ENCODE measurements at regions of chrX and their contacts with region 1.

Region 1: GRCh38 chrX:54639346-54640102 is 109.5 kb downstream of the GNL3L start:
- DNase-seq: peak; percentile 92 to 95
- ATAC-seq: peak; percentile 73 to 79
- H3K4me3 ChIP-seq: peak overlapping the region; percentile 53 to 63 (median 60)
- H3K27ac ChIP-seq: peak overlapping the region; percentile 85 to 92 (median 90)
- H3K4me1 ChIP-seq: peaks cover 13 to 20% of the 10 kb centered on the region in 2 donors
- H3K27me3 ChIP-seq: no peaks in the 10 kb centered on the region
- CTCF ChIP-seq: peak in 4 of 5 experiments; percentile 71 to 82 (median 76)
- POLR2A ChIP-seq: peak; percentile 62 to 81

Region 2: DNA sequence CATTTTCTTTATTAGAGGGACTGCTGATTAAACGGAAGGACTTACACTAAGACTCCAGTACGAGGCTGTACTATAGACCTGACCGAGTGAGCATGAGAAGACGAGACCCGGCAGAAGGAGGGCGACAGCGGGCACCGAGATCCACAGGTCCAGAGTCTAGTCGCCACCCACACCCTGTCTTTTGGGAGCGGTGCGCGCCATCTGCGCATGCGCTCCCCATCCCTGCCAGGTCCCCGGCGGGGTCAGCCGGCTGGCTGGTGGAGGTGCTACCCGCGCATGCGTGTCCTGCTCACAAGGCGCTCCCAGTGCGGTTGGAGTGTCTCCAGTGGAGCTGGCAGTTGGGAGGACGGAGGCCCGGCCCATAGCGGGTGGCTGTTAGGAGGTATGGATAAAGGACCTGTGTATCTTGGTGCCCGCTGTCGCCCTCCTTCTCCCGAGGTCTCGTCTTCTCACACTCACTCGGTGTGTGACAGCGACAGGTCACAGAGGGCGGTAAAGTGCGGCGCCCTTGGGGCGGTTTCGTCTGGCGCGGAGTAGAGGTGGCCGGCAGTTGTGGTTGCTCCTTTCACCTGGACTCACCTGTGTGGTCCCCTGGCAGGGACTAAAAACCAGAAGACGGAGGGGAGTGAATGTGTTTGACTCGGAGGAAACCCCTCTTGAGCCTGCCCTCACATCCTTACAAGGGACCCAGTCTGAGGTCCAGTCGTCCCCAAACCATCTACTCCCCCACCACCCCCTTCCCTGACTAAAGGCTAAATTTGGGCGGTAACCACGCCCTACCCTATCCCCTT is 1197.8 kb before region 1 on chrX:
- in situ Hi-C with region 1: no loop called
- intact Hi-C with region 1: loop called (anchors 2 kb)
- DNase-seq: peak; percentile 66 to 87
- ATAC-seq: peak; percentile 64 to 76
- H3K4me3 ChIP-seq: peak overlapping the region; percentile 44 to 57 (median 55)
- H3K27ac ChIP-seq: peak overlapping the region; percentile 83 to 94 (median 90)
- H3K4me1 ChIP-seq: no peaks in the 10 kb centered on the region
- H3K27me3 ChIP-seq: peaks cover 0 to 12% (median 4%) of the 10 kb centered on the region in 3 donors
- CTCF ChIP-seq: no peak
- POLR2A ChIP-seq: peak; percentile 66 to 72

Region 3: GRCh38 chrX:54182864-54183608 is 456.5 kb before region 1 on chrX and contains the start of gene FAM120C:
- in situ Hi-C with region 1: no loop called
- intact Hi-C with region 1: loop called (anchors 5 kb)
- DNase-seq: peak; percentile 37 to 61
- ATAC-seq: peak; percentile 85 to 90
- H3K4me3 ChIP-seq: peak within 1 kb of the TSS; percentile 69 to 75 (median 72)
- H3K27ac ChIP-seq: peak within 1 kb of the TSS; percentile 84 to 93 (median 88)
- H3K4me1 ChIP-seq: peaks cover 28 to 32% of the 10 kb centered on the region in 2 donors
- H3K27me3 ChIP-seq: no peaks in the 10 kb centered on the region
- CTCF ChIP-seq: no peak
- POLR2A ChIP-seq: no peak
- total RNA-seq, gene FAM120C: 4.7 to 12.8 (median 10.9) TPM

Region 4: GRCh38 chrX:54659547-54659946 is 20.0 kb after region 1 on chrX:
- in situ Hi-C with region 1: no loop called
- intact Hi-C with region 1: no loop called
- DNase-seq: no peak
- ATAC-seq: no peak
- H3K4me3 ChIP-seq: no peak overlapping the region
- H3K27ac ChIP-seq: no peak overlapping the region
- H3K4me1 ChIP-seq: no peaks in the 10 kb centered on the region
- H3K27me3 ChIP-seq: no peaks in the 10 kb centered on the region
- CTCF ChIP-seq: no peak
- POLR2A ChIP-seq: no peak

Region 5: GRCh38 chrX:54708404-54708803 is 68.9 kb after region 1 on chrX:
- in situ Hi-C with region 1: no loop called
- intact Hi-C with region 1: loop called (anchors 5 kb)
- DNase-seq: peak; percentile 1 to 30
- ATAC-seq: peak in 1 of 2 donors; percentile 87
- H3K4me3 ChIP-seq: no peak overlapping the region
- H3K27ac ChIP-seq: no peak overlapping the region
- H3K4me1 ChIP-seq: peaks cover 3 to 4% of the 10 kb centered on the region in 2 donors
- H3K27me3 ChIP-seq: no peaks in the 10 kb centered on the region
- CTCF ChIP-seq: no peak
- POLR2A ChIP-seq: no peak

Region 6: GRCh38 chrX:54786962-54787361 is 147.4 kb after region 1 on chrX:
- in situ Hi-C with region 1: no loop called
- intact Hi-C with region 1: loop called (anchors 1 kb)
- DNase-seq: no peak
- ATAC-seq: peak; percentile 34 to 53
- H3K4me3 ChIP-seq: no peak overlapping the region
- H3K27ac ChIP-seq: no peak overlapping the region
- H3K4me1 ChIP-seq: peaks cover 0 to 4% of the 10 kb centered on the region in 2 donors
- H3K27me3 ChIP-seq: no peaks in the 10 kb centered on the region
- CTCF ChIP-seq: peak in 3 of 5 experiments; percentile 28 to 34 (median 34)
- POLR2A ChIP-seq: no peak

Region 7: DNA sequence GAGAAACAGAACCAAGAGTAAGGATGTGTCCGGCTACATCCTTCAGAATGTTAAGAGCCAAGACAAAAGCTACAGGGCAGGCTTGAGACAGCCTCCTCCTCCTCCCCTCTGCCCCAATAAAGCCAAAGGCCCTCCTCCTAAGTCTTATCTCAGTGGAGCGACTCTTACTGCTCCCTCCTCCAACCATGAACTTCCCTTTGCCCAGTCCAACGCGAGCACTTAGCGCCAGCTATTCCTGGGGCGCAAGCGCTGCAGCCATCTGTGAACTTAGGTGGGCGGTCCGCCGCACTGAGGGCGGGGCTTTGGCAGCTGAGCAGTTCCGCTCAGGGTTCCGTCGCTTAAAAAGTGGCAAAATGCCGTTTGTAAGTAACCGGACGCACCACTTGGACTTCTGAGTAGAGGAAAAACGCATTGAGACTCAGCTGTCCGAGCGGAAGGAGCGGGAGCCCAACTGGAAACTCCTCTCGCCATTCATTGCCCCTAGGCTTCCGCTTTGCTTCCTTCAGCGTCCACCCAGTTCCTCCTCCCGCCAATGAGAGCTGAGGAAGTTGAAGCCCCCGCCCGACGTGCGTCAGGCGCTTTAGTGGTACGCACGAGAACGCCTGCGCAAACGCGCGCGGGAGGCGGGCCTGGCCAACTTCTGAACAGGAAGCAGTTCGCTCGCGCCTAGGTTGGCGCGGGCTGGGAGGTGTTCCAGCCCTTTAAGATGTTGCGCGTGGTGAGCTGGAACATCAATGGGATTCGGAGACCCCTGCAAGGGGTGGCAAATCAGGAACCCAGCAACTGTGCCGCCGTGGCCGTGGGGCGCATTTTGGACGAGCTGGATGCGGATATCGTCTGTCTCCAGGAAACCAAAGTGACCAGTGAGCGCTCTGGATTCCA is 360.4 kb after region 1 on chrX and contains the start of gene APEX2:
- in situ Hi-C with region 1: loop called in 1 of 4 experiments (anchors 25 kb)
- intact Hi-C with region 1: loop called (anchors 2 kb)
- DNase-seq: peak; percentile 81 to 91
- ATAC-seq: peak; percentile 73 to 75
- H3K4me3 ChIP-seq: peak within 1 kb of the TSS; percentile 63 to 80 (median 72)
- H3K27ac ChIP-seq: peak within 1 kb of the TSS; percentile 84 to 93 (median 90)
- H3K4me1 ChIP-seq: peaks cover 15 to 20% of the 10 kb centered on the region in 2 donors
- H3K27me3 ChIP-seq: no peaks in the 10 kb centered on the region
- CTCF ChIP-seq: no peak
- POLR2A ChIP-seq: peak; percentile 69 to 90
- total RNA-seq, gene APEX2: 8.3 to 17.2 (median 8.8) TPM

Region 8: GRCh38 chrX:55160685-55161552 is 521.4 kb after region 1 on chrX:
- in situ Hi-C with region 1: no loop called
- intact Hi-C with region 1: loop called (anchors 2 kb)
- DNase-seq: peak; percentile 81 to 87
- ATAC-seq: peak; percentile 96
- H3K4me3 ChIP-seq: peak overlapping the region; percentile 64 to 73 (median 68)
- H3K27ac ChIP-seq: peak overlapping the region; percentile 90 to 91 (median 91)
- H3K4me1 ChIP-seq: peaks cover 0 to 5% of the 10 kb centered on the region in 2 donors
- H3K27me3 ChIP-seq: no peaks in the 10 kb centered on the region
- CTCF ChIP-seq: peak; percentile 12 to 52 (median 41)
- POLR2A ChIP-seq: peak; percentile 76 to 83

Measured in gastrocnemius medialis (tissue), 4 donors.